ENCODE measurements at regions of chr6 and their contacts with region 1.

Region 1: GRCh38 chr6:11155589-11155988 is 44.1 kb upstream of the ERVFRD-1 start:
- H3K4me3 ChIP-seq: no peak overlapping the region
- H3K27ac ChIP-seq: no peak overlapping the region
- H3K4me1 ChIP-seq: no peaks in the 10 kb centered on the region
- CTCF ChIP-seq: no peak

Region 2: GRCh38 chr6:11144393-11144851 is 11.2 kb before region 1 on chr6:
- CTCF ChIA-PET with region 1: interaction called, 19 read pairs
- POLR2A ChIA-PET with region 1: no interaction called
- H3K4me3 ChIP-seq: no peak overlapping the region
- H3K27ac ChIP-seq: no peak overlapping the region
- H3K4me1 ChIP-seq: no peaks in the 10 kb centered on the region
- CTCF ChIP-seq: peak; percentile 67; the same call in 1 of the 2 replicates

Measured in HEK293 (cell line).